Astrocyte of the cerebellum (primary cell): ENCODE measurements at regions of chr19 and their contacts with region 1.

Region 1: GRCh38 chr19:58166708-58167280 is 16.1 kb upstream of the ZNF274 start:
- DNase-seq: no peak
- H3K4me3 ChIP-seq: no peak overlapping the region
- CTCF ChIP-seq: no peak

Region 2: DNA sequence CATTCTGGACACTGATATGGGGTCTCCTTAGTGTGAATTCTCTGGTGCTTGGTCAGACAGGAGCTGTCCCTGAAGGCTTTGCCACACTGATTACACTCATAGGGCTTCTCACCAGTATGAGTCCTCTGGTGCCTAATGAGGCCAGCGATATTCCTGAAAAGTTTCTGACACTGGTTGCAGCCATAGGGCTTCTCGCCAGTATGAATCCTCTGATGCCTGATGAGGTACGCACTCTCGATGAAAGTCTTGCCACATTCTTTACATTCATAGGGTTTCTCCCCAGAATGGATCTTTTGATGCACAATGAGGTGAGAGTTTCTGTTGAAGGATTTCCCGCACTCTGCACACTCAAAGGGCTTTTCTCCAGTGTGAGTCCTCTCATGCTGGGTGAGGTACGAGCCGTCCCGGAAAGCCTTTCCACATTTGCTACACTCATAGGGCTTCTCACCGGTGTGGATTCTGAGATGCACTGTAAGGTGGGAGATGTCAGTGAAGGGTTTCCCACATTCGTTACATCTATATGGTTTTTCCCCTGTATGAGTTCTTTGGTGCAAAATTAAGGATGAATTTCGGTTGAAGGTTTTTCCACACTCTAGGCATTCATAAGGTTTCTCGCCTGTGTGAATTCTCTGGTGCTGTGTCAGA is 38.6 kb before region 1 on chr19:
- in situ Hi-C with region 1: loop called (anchors 5 kb)
- DNase-seq: no peak
- H3K4me3 ChIP-seq: no peak overlapping the region
- CTCF ChIP-seq: no peak